ENCODE measurements at regions of chr4 and their contacts with region 1.

Region 1: DNA sequence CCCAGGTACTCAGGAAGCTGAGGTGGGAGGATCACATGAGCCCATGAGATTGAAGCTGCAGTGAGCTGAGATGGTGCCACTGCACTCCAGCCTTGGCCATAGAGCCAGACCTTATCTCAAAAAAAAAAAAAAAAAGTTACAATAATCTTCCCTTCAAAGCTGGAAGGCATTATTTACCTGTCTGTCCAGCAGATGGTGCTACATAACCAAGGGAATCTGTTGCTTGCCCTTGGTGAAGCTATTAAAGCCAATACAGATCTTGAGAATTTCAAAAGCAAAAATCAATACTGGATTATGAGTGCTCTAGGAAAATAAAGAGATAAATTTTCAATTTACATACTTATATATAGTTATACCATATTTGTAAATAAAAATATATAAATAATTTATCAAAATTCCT is 25.9 kb downstream of the PKD2 start:
- DNase-seq: no peak
- ATAC-seq: peak; percentile 63

Region 2: DNA sequence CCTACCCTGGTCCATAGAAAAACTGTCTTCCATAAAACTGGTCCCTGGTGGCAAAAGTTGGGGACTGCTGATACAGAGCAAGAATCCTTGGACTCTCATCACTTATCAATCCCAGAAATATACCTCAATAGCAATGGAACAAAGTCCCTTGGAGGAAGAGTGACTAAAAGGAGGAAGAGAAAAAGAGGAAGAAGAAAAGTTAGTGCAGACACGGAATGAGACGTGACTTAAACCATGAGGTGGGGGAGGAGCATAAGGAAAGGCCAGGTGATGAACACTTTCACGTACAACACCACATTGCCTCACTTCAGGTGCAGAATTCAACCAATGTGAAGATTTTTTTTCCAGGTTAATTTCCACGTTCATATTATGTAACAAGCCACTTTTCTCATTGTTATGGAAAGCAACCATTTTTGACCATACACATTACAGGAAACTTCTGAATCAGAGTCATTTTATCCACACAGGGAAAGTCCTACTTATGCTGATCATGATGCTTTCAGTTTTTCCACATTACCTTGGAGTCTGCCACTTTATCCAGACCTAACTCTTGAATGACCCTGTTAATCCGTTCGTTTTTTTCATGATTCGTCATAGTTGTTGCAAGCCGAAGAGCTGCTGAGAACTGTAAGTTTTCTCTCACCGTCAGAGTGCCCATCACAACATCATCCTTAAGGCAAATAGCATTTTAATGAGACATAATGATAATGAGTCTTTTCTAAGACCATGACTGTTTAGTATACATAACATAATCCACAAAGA is 97.4 kb after region 1 on chr4:
- intact Hi-C with region 1: no loop called
- DNase-seq: no peak
- ATAC-seq: no peak

Region 3: GRCh38 chr4:88211473-88212252 is 178.4 kb after region 1 on chr4:
- intact Hi-C with region 1: loop called (anchors 10 kb)
- DNase-seq: no peak
- ATAC-seq: peak; percentile 63

Measured in left ventricle myocardium superior (tissue), 1 donor.